Transverse colon (tissue), 4 donors: ENCODE measurements at regions of chr12 and their contacts with region 1.

Region 1: GRCh38 chr12:46124848-46125619 is 134.7 kb upstream of the SCAF11 start:
- DNase-seq: peak; percentile 51
- H3K4me3 ChIP-seq: peak overlapping the region in 2 of 4 donors; percentile 13 to 31
- H3K27ac ChIP-seq: peak overlapping the region; percentile 33 to 53 (median 41)
- H3K4me1 ChIP-seq: peaks cover 3 to 27% (median 16%) of the 10 kb centered on the region in 4 donors
- H3K27me3 ChIP-seq: no peaks in the 10 kb centered on the region
- CTCF ChIP-seq: peak; percentile 67 to 91 (median 81)
- EP300 ChIP-seq: no peak
- POLR2A ChIP-seq: no peak

Region 2: GRCh38 chr12:46071769-46072624 is 53.0 kb before region 1 on chr12:
- in situ Hi-C with region 1: no loop called
- intact Hi-C with region 1: no loop called
- DNase-seq: peak; percentile 83
- H3K4me3 ChIP-seq: no peak overlapping the region
- H3K27ac ChIP-seq: peak overlapping the region in 1 of 4 donors; percentile 17
- H3K4me1 ChIP-seq: peaks cover 0 to 4% (median 2%) of the 10 kb centered on the region in 4 donors
- H3K27me3 ChIP-seq: no peaks in the 10 kb centered on the region
- CTCF ChIP-seq: peak; percentile 88 to 98 (median 91)
- EP300 ChIP-seq: no peak
- POLR2A ChIP-seq: no peak

Region 3: GRCh38 chr12:46292755-46293402 is 167.8 kb after region 1 on chr12:
- in situ Hi-C with region 1: loop called in 1 of 4 experiments (anchors 10 kb)
- intact Hi-C with region 1: no loop called
- DNase-seq: no peak
- H3K4me3 ChIP-seq: no peak overlapping the region
- H3K27ac ChIP-seq: no peak overlapping the region
- H3K4me1 ChIP-seq: no peaks in the 10 kb centered on the region
- H3K27me3 ChIP-seq: no peaks in the 10 kb centered on the region
- CTCF ChIP-seq: no peak
- EP300 ChIP-seq: no peak
- POLR2A ChIP-seq: no peak

Region 4: DNA sequence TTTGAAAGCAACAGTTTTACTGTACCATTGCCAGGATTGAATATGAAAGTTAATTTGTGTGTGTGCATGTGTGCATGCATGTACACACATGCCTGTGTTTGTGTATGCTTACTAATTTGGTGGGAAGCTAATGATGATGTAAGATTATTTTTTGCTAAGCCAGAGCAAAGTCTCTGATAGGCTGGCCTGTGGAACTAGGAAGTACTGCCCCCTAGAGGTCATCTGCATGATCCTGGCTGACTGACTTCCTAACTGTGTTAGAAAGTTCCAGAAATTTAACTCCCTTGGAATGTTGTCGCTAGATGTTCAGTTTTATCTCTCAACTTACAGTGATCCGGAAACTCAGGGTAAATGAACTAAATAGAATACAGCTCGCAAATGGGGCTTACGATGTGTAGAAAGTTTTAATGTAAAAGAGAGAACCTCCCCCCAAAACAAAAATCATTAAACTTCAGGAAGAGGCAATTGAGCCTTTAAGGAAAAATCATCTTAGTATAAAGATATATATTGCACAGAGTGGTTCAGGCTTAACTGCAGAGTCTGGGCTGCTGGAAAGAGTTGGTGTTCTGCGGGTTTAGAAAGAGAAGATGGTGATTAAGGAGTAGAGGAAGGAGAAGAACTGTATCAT is 178.1 kb after region 1 on chr12:
- in situ Hi-C with region 1: loop called in 2 of 4 experiments (anchors 10 to 25 kb)
- intact Hi-C with region 1: no loop called
- DNase-seq: peak; percentile 60
- H3K4me3 ChIP-seq: no peak overlapping the region
- H3K27ac ChIP-seq: no peak overlapping the region
- H3K4me1 ChIP-seq: peaks cover 0 to 3% (median 0%) of the 10 kb centered on the region in 4 donors
- H3K27me3 ChIP-seq: no peaks in the 10 kb centered on the region
- CTCF ChIP-seq: peak; percentile 66 to 75 (median 70)
- EP300 ChIP-seq: no peak
- POLR2A ChIP-seq: no peak

Region 5: GRCh38 chr12:46661110-46661845 is 536.2 kb after region 1 on chr12:
- in situ Hi-C with region 1: loop called in 3 of 4 experiments (anchors 25 kb)
- intact Hi-C with region 1: loop called (anchors 10 kb)
- DNase-seq: no peak
- H3K4me3 ChIP-seq: no peak overlapping the region
- H3K27ac ChIP-seq: peak overlapping the region; percentile 61 to 68 (median 66)
- H3K4me1 ChIP-seq: peaks cover 0 to 36% (median 20%) of the 10 kb centered on the region in 4 donors
- H3K27me3 ChIP-seq: no peaks in the 10 kb centered on the region
- CTCF ChIP-seq: peak; percentile 75 to 87 (median 77)
- EP300 ChIP-seq: no peak
- POLR2A ChIP-seq: no peak

Region 6: GRCh38 chr12:46675736-46676135 is 550.7 kb after region 1 on chr12:
- in situ Hi-C with region 1: loop called (anchors 25 kb)
- intact Hi-C with region 1: no loop called
- DNase-seq: no peak
- H3K4me3 ChIP-seq: no peak overlapping the region
- H3K27ac ChIP-seq: no peak overlapping the region
- H3K4me1 ChIP-seq: peaks cover 0 to 4% (median 1%) of the 10 kb centered on the region in 4 donors
- H3K27me3 ChIP-seq: no peaks in the 10 kb centered on the region
- CTCF ChIP-seq: peak; percentile 66 to 81 (median 70)
- EP300 ChIP-seq: no peak
- POLR2A ChIP-seq: no peak

Region 7: GRCh38 chr12:47715393-47715876 is 1590.4 kb after region 1 on chr12:
- in situ Hi-C with region 1: no loop called
- intact Hi-C with region 1: no loop called
- DNase-seq: peak; percentile 84
- H3K4me3 ChIP-seq: no peak overlapping the region
- H3K27ac ChIP-seq: peak overlapping the region; percentile 5 to 93 (median 88)
- H3K4me1 ChIP-seq: peaks cover 24 to 36% (median 26%) of the 10 kb centered on the region in 4 donors
- H3K27me3 ChIP-seq: no peaks in the 10 kb centered on the region
- CTCF ChIP-seq: peak; percentile 72 to 84 (median 77)
- EP300 ChIP-seq: no peak
- POLR2A ChIP-seq: no peak